ENCODE measurements at regions of chr7 and their contacts with region 1.

Region 1: GRCh38 chr7:98878365-98879165 is at the start of gene TRRAP:
- DNase-seq: peak; percentile 74 to 84 (median 82)
- H3K4me3 ChIP-seq: peak within 1 kb of the TSS; percentile 99 to 100
- H3K4me3 Mint-ChIP-seq: peak within 1 kb of the TSS; percentile 91 to 99 (median 97)
- H3K27ac ChIP-seq: peak within 1 kb of the TSS; percentile 92
- H3K27ac Mint-ChIP-seq: peak within 1 kb of the TSS; percentile 94 to 98 (median 97)
- H3K4me1 ChIP-seq: peaks cover 39% of the 10 kb centered on the region
- H3K4me1 Mint-ChIP-seq: peaks cover 11 to 42% (median 23%) of the 10 kb centered on the region in 4 donors
- H3K27me3 ChIP-seq: no peaks in the 10 kb centered on the region
- H3K27me3 Mint-ChIP-seq: peaks cover 0 to 3% of the 10 kb centered on the region in 2 donors
- total RNA-seq, gene TRRAP: 83.3 to 89.9 TPM

Region 2: DNA sequence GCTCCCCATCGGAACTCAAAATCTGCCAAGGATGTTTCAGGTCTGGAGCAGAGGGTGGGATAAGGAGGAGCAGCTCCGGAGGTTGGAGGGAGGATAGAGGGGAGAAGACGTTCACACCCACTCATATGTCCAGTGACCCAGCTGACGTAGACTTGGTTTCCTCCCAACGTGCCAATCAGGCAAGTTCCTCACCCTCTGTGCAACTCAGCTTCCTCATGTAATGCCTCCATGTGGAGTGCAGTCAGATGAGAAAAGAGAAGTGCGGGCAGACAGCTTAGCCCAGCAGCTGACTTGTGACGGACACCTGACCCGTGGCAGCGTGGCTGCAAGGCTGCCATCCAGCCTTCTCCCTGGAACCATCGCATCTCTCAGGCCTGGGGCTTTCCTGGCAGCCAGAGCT is 174.6 kb before region 1 on chr7:
- CTCF ChIA-PET with region 1: no interaction called
- POLR2A ChIA-PET with region 1: no interaction called
- intact Hi-C with region 1: no loop called
- DNase-seq: no peak
- H3K4me3 ChIP-seq: no peak overlapping the region
- H3K4me3 Mint-ChIP-seq: no peak overlapping the region
- H3K27ac ChIP-seq: no peak overlapping the region
- H3K27ac Mint-ChIP-seq: no peak overlapping the region
- H3K4me1 ChIP-seq: no peaks in the 10 kb centered on the region
- H3K4me1 Mint-ChIP-seq: no peaks in the 10 kb centered on the region
- H3K27me3 ChIP-seq: no peaks in the 10 kb centered on the region
- H3K27me3 Mint-ChIP-seq: peaks cover 1 to 11% of the 10 kb centered on the region in 2 donors

Region 3: GRCh38 chr7:98930921-98931320 is 52.4 kb after region 1 on chr7:
- CTCF ChIA-PET with region 1: interaction called, 6 read pairs
- POLR2A ChIA-PET with region 1: interaction called, 8 read pairs
- intact Hi-C with region 1: loop called (anchors 1 kb)
- DNase-seq: peak; percentile 62 to 82 (median 71)
- H3K4me3 ChIP-seq: peak overlapping the region; percentile 2 to 3
- H3K4me3 Mint-ChIP-seq: peak overlapping the region; percentile 86 to 93 (median 90)
- H3K27ac ChIP-seq: peak overlapping the region; percentile 46
- H3K27ac Mint-ChIP-seq: peak overlapping the region; percentile 86 to 99 (median 94)
- H3K4me1 ChIP-seq: peaks cover 37% of the 10 kb centered on the region
- H3K4me1 Mint-ChIP-seq: peaks cover 25 to 50% (median 35%) of the 10 kb centered on the region in 4 donors
- H3K27me3 ChIP-seq: no peaks in the 10 kb centered on the region
- H3K27me3 Mint-ChIP-seq: no peaks in the 10 kb centered on the region

Region 4: GRCh38 chr7:99072126-99072525 is 193.6 kb after region 1 on chr7:
- CTCF ChIA-PET with region 1: no interaction called
- POLR2A ChIA-PET with region 1: no interaction called
- intact Hi-C with region 1: no loop called
- DNase-seq: no peak
- H3K4me3 ChIP-seq: no peak overlapping the region
- H3K4me3 Mint-ChIP-seq: no peak overlapping the region
- H3K27ac ChIP-seq: no peak overlapping the region
- H3K27ac Mint-ChIP-seq: no peak overlapping the region
- H3K4me1 ChIP-seq: no peaks in the 10 kb centered on the region
- H3K4me1 Mint-ChIP-seq: peaks cover 17 to 36% (median 24%) of the 10 kb centered on the region in 4 donors
- H3K27me3 ChIP-seq: no peaks in the 10 kb centered on the region
- H3K27me3 Mint-ChIP-seq: no peaks in the 10 kb centered on the region

Region 5: GRCh38 chr7:99126921-99127553 is 248.5 kb after region 1 on chr7:
- CTCF ChIA-PET with region 1: no interaction called
- POLR2A ChIA-PET with region 1: no interaction called
- intact Hi-C with region 1: no loop called
- DNase-seq: no peak
- H3K4me3 ChIP-seq: no peak overlapping the region
- H3K4me3 Mint-ChIP-seq: no peak overlapping the region
- H3K27ac ChIP-seq: no peak overlapping the region
- H3K27ac Mint-ChIP-seq: no peak overlapping the region
- H3K4me1 ChIP-seq: peaks cover 13% of the 10 kb centered on the region
- H3K4me1 Mint-ChIP-seq: peaks cover 29 to 60% (median 45%) of the 10 kb centered on the region in 4 donors
- H3K27me3 ChIP-seq: no peaks in the 10 kb centered on the region
- H3K27me3 Mint-ChIP-seq: no peaks in the 10 kb centered on the region

Region 6: GRCh38 chr7:99143853-99144672 is 265.5 kb after region 1 on chr7 and contains the start of gene SMURF1:
- CTCF ChIA-PET with region 1: no interaction called
- POLR2A ChIA-PET with region 1: interaction called, 3 read pairs
- intact Hi-C with region 1: loop called (anchors 1 kb)
- DNase-seq: peak; percentile 64 to 87 (median 77)
- H3K4me3 ChIP-seq: peak within 1 kb of the TSS; percentile 55 to 94
- H3K4me3 Mint-ChIP-seq: peak within 1 kb of the TSS; percentile 93 to 99 (median 96)
- H3K27ac ChIP-seq: peak within 1 kb of the TSS; percentile 80
- H3K27ac Mint-ChIP-seq: peak within 1 kb of the TSS; percentile 94 to 99 (median 97)
- H3K4me1 ChIP-seq: peaks cover 25% of the 10 kb centered on the region
- H3K4me1 Mint-ChIP-seq: peaks cover 20 to 52% (median 36%) of the 10 kb centered on the region in 4 donors
- H3K27me3 ChIP-seq: no peaks in the 10 kb centered on the region
- H3K27me3 Mint-ChIP-seq: no peaks in the 10 kb centered on the region
- total RNA-seq, gene SMURF1: 21.4 to 23.2 TPM

Measured in CD4-positive, alpha-beta memory T cell (primary cell).